MCF 10A (cell line): ENCODE measurements at regions of chr22 and their contacts with region 1.

Region 1: DNA sequence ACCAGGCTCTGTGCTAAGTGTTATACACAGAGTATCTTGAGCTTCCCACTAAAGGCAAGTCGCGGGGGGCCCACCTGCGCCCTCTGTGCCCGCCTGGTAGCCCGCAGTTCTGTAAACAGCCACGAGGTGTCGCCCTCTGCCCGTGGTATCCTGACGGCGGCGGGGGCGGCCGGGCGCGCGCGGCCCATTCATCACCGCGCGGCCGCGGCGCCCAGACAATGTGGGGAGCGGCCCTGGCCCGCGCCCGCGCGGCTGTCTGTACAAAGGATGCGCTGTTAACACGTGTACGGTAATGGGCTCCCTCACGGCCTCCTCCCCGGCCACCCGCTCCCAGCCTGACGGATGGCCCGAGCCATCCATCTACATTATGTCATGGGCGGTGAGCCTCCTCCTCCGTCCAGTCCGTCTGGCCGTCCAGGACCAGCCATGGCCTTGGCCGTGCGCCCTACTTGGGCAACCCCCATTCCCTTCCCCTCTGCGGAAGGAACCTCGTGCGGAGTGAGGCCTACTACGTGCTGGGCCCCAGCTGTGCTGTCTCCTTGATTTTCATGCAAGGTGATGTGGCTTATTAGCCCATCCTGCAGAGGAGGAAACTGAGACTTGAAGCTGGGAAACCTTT is 99.4 kb downstream of the MIAT start:
- DNase-seq: peak; percentile 11
- H3K4me3 Mint-ChIP-seq: no peak overlapping the region
- H3K27ac Mint-ChIP-seq: no peak overlapping the region
- H3K4me1 Mint-ChIP-seq: no peaks in the 10 kb centered on the region
- H3K27me3 Mint-ChIP-seq: no peaks in the 10 kb centered on the region
- CTCF ChIP-seq: peak; percentile 93

Region 2: GRCh38 chr22:26744892-26745808 is 11.6 kb before region 1 on chr22:
- CTCF ChIA-PET with region 1: interaction called, 10 read pairs
- POLR2A ChIA-PET with region 1: no interaction called
- intact Hi-C with region 1: no loop called
- DNase-seq: no peak
- H3K4me3 Mint-ChIP-seq: no peak overlapping the region
- H3K27ac Mint-ChIP-seq: no peak overlapping the region
- H3K4me1 Mint-ChIP-seq: peaks cover 7% of the 10 kb centered on the region
- H3K27me3 Mint-ChIP-seq: no peaks in the 10 kb centered on the region
- CTCF ChIP-seq: no peak